ENCODE measurements at regions of chr2 and their contacts with region 1.

Region 1: DNA sequence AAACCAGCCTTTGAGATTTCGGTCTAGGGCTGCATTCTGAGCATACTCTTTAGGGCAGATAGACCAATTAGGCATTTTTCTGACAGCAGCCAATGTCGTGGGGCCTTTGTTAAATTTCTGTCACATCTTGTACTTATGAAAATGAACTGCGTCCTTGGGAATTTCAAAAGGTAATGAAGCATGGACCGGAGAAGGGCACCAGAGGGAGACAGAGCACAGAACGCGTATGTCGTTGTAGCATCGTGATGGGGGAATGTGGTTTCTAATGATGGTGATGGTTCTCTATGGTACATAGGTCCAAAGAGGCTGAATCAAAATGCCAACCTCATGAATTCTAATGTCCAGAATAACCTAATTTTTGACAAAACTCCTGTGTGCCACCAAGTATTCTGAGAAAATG is 483.9 kb upstream of the CRIM1 start:
- DNase-seq: peak; percentile 33
- H3K4me3 ChIP-seq: no peak overlapping the region
- H3K27ac ChIP-seq: no peak overlapping the region
- H3K4me1 ChIP-seq: no peaks in the 10 kb centered on the region
- H3K27me3 ChIP-seq: no peaks in the 10 kb centered on the region
- CTCF ChIP-seq: peak; percentile 37; the same call in 1 of the 2 replicates

Region 2: DNA sequence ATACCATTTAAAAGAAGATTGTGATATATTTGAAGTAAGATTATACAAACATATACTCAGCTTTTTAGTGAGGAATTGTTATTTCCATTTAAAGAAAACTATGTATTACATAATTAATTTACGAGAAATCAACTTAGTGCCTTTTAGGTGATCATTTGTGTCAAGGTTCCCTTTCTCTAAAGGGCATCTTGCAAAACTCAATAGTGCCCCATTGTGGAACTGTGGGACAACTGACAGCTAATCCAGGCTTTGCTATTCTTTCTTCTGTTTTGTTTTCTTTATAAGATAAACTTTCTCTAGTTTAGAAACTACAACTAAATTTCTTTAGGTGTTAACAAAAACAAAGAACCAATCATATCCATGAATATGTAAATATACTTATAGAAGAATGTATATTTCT is 800.5 kb after region 1 on chr2:
- CTCF ChIA-PET with region 1: no interaction called
- POLR2A ChIA-PET with region 1: no interaction called
- intact Hi-C with region 1: loop called (anchors 10 kb)
- DNase-seq: peak; percentile 64
- H3K4me3 ChIP-seq: no peak overlapping the region
- H3K27ac ChIP-seq: no peak overlapping the region
- H3K4me1 ChIP-seq: peaks cover 18% of the 10 kb centered on the region
- H3K27me3 ChIP-seq: no peaks in the 10 kb centered on the region
- CTCF ChIP-seq: peak; percentile 67